ENCODE measurements at regions of chr2 and their contacts with region 1.

Region 1: GRCh38 chr2:173990970-173991819 is 26.0 kb upstream of the SP3 start:
- DNase-seq: peak; percentile 43
- ATAC-seq: no peak
- H3K4me3 ChIP-seq: no peak overlapping the region
- H3K27ac ChIP-seq: peak overlapping the region; percentile 79
- H3K4me1 ChIP-seq: peaks cover 19% of the 10 kb centered on the region
- H3K27me3 ChIP-seq: no peaks in the 10 kb centered on the region
- CTCF ChIP-seq: no peak

Region 2: GRCh38 chr2:174004905-174005605 is 13.9 kb after region 1 on chr2:
- CTCF ChIA-PET with region 1: no interaction called
- POLR2A ChIA-PET with region 1: no interaction called
- intact Hi-C with region 1: no loop called
- DNase-seq: peak; percentile 59
- ATAC-seq: peak; percentile 63
- H3K4me3 ChIP-seq: no peak overlapping the region
- H3K27ac ChIP-seq: no peak overlapping the region
- H3K4me1 ChIP-seq: 0 out of 2 replicates have a peak, but pooled peaks cover 5% of the 10 kb centered on the region
- H3K27me3 ChIP-seq: no peaks in the 10 kb centered on the region
- CTCF ChIP-seq: no peak

Region 3: DNA sequence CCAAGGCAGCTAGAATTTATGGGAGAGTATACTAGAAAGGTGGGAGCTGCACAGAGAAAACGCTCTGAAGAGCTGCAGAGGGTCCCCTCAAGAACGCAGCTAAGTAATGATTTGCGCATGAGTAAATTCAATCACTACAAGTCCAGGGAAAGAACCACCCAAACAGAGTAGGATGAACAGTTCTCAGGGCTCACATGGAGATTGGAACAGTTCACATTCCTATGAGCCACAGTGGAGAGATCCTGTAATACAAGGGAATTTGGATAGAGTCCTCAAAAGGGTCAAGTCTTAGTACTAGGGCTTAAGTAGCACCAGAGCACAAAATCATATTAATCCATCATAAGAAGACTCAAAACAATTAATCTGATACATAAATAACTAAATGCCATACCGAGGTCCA is 244.5 kb after region 1 on chr2:
- CTCF ChIA-PET with region 1: interaction called, 10 read pairs
- POLR2A ChIA-PET with region 1: no interaction called
- intact Hi-C with region 1: no loop called
- DNase-seq: no peak
- ATAC-seq: no peak
- H3K4me3 ChIP-seq: no peak overlapping the region
- H3K27ac ChIP-seq: no peak overlapping the region
- H3K4me1 ChIP-seq: peaks cover 35% of the 10 kb centered on the region
- H3K27me3 ChIP-seq: no peaks in the 10 kb centered on the region
- CTCF ChIP-seq: no peak

Measured in PC-3 (cell line).